ENCODE measurements at regions of chr2 and their contacts with region 1.

Region 1: DNA sequence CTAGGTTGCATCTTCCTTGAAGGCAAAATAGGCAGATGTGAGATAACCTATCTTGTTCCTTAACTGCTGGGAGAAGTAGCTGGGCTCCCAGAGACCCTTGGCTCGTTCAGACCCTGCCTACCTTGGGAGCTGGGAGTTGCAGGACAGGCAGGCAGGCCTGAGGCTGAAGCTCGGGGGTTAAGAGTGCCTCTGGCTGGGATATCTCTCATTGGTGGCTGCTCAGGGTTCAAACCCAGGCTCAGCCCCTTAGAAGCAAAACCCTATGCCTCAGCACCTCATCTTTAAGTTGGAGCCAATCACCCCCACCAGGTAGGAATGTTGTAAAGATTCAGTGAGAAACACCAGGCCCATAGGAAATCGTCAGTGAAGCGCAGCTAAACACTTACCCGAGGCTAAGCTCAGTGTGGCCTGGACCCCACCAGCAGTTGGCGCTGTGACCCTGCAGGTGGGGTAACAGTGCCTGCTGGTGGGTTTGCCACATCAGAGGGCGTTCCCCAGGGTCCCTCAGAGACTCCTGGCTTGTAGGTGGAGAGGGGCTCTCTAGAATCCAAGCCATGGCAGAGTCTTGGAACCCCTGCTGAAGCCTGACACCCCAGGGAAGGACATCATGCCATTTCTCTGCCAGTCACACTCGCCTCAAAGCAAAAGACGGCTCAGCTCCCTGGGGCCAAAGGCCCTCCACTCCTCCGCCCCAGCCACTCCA is 54.6 kb upstream of the GPR17 start:
- DNase-seq: peak; percentile 66
- H3K4me3 ChIP-seq: no peak overlapping the region
- H3K27ac ChIP-seq: no peak overlapping the region
- H3K4me1 ChIP-seq: no peaks in the 10 kb centered on the region
- H3K27me3 ChIP-seq: no peaks in the 10 kb centered on the region
- CTCF ChIP-seq: peak; percentile 94 to 99
- POLR2A ChIP-seq: no peak

Region 2: DNA sequence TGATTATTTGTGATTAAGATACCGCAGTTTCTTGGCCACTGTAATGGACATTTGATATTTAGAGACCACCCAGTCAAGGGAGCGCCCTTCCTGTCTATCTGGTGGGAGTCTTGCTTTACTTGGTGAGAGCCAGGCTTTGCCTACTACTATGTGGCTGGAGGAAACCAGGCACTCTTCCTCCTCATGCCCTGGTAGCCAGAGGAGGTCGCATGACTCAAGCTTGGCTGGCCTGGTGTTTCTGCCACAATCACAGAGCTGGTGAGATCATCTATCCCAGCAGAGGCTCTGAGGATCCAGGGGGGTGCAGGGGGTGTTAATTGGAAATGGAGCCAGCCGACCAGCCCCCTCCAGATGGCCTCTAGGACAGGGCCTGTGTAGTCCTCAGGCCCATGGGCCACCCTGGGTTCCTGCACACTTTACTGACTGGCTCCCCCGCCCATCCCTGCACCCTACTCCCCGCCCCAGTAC is 437.6 kb before region 1 on chr2:
- CTCF ChIA-PET with region 1: no interaction called
- POLR2A ChIA-PET with region 1: no interaction called
- dilution Hi-C with region 1: no loop called
- intact Hi-C with region 1: no loop called
- DNase-seq: peak; percentile 86
- H3K4me3 ChIP-seq: no peak overlapping the region
- H3K27ac ChIP-seq: peak overlapping the region; percentile 33
- H3K4me1 ChIP-seq: peaks cover 14% of the 10 kb centered on the region
- H3K27me3 ChIP-seq: no peaks in the 10 kb centered on the region
- CTCF ChIP-seq: no peak
- POLR2A ChIP-seq: no peak

Region 3: DNA sequence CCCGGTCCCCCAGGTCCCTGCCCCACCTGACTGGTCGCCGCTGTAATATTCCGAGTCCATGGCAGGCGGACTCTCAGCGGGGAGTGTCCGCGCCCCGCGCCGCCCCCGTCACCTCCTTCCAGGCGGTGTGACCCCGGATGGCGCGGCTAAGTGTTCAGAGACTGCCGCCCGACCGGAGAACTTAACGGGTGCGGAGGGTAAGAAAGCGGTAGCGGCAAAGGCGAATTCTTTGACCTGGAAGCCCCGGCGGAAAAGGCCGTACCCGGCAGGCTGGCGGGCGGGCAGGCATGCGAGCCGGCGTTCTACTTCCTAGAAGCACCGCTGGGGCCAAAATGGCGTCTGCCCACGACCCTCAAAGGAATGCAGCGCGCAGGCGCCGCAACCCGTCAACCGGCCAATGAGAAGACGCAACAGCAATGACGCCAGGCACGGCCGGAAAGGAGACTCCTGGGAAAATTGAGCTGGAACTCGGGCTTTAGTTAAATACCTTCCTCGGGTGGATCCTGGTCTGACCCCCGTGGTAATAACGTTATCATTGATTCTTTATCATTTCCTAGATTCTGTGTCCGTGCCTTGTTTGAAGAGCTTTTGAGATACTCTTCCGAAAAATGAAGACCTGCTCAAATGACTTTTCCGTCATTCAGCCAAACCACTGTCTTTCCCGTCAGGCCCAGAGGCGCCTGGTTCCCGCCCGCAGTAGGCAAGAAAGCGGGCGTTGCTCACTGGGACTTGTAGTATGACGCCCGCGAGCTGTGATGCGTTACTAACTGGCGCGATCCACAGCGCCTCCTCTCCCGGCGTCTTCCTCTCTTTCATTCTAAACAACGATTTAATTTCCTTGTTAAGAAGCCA is 65.0 kb before region 1 on chr2 and contains the start of gene IWS1:
- CTCF ChIA-PET with region 1: interaction called, 17 read pairs
- POLR2A ChIA-PET with region 1: no interaction called
- dilution Hi-C with region 1: no loop called
- intact Hi-C with region 1: no loop called
- DNase-seq: peak; percentile 98
- H3K4me3 ChIP-seq: peak within 1 kb of the TSS; percentile 78 to 92 (median 88)
- H3K27ac ChIP-seq: peak within 1 kb of the TSS; percentile 100
- H3K4me1 ChIP-seq: peaks cover 11% of the 10 kb centered on the region
- H3K27me3 ChIP-seq: no peaks in the 10 kb centered on the region
- CTCF ChIP-seq: peak in 1 of 2 donors; percentile 14
- POLR2A ChIP-seq: peak; percentile 88
- total RNA-seq, gene IWS1: 44.9 and 51.0 TPM in 2 replicates

Region 4: GRCh38 chr2:127609031-127609751 is 17.8 kb after region 1 on chr2:
- CTCF ChIA-PET with region 1: interaction called, 23 read pairs
- POLR2A ChIA-PET with region 1: interaction called, 6 read pairs
- dilution Hi-C with region 1: no loop called
- intact Hi-C with region 1: no loop called
- DNase-seq: no peak
- H3K4me3 ChIP-seq: no peak overlapping the region
- H3K27ac ChIP-seq: no peak overlapping the region
- H3K4me1 ChIP-seq: no peaks in the 10 kb centered on the region
- H3K27me3 ChIP-seq: peaks cover 4 to 7% of the 10 kb centered on the region in 2 experiments
- CTCF ChIP-seq: no peak
- POLR2A ChIP-seq: no peak

Region 5: GRCh38 chr2:127649684-127650040 is 58.3 kb after region 1 on chr2:
- CTCF ChIA-PET with region 1: interaction called, 424 read pairs
- POLR2A ChIA-PET with region 1: interaction called, 3 read pairs
- dilution Hi-C with region 1: no loop called
- intact Hi-C with region 1: loop called (anchors 1 kb)
- DNase-seq: peak; percentile 69
- H3K4me3 ChIP-seq: no peak overlapping the region
- H3K27ac ChIP-seq: no peak overlapping the region
- H3K4me1 ChIP-seq: peaks cover 25% of the 10 kb centered on the region
- H3K27me3 ChIP-seq: no peaks in the 10 kb centered on the region
- CTCF ChIP-seq: peak; percentile 85 to 88
- POLR2A ChIP-seq: no peak

Region 6: DNA sequence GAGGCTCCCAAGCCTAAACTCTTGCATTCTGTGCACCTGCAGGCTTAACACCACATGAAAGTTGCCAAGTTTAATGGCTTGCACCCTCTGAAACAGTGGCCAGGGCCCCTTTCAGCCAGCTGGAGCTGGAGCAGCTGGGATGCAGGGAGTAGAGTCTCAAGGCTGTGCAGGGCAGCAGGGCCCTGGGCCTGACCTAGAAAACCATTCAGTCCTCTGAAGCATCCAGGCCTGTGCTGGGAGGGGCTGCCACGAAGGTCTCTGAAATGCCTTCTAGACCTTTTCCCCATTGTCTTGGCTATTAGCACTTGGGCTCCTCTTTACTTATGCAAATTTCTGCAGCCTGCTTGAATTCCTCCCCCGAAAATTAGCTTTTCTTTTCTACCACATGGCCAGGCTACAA is 99.3 kb after region 1 on chr2:
- CTCF ChIA-PET with region 1: interaction called, 162 read pairs
- POLR2A ChIA-PET with region 1: interaction called, 5 read pairs
- dilution Hi-C with region 1: no loop called
- intact Hi-C with region 1: loop called (anchors 1 kb)
- DNase-seq: no peak
- H3K4me3 ChIP-seq: no peak overlapping the region
- H3K27ac ChIP-seq: no peak overlapping the region
- H3K4me1 ChIP-seq: peaks cover 4% of the 10 kb centered on the region
- H3K27me3 ChIP-seq: no peaks in the 10 kb centered on the region
- CTCF ChIP-seq: no peak
- POLR2A ChIP-seq: no peak

Region 7: DNA sequence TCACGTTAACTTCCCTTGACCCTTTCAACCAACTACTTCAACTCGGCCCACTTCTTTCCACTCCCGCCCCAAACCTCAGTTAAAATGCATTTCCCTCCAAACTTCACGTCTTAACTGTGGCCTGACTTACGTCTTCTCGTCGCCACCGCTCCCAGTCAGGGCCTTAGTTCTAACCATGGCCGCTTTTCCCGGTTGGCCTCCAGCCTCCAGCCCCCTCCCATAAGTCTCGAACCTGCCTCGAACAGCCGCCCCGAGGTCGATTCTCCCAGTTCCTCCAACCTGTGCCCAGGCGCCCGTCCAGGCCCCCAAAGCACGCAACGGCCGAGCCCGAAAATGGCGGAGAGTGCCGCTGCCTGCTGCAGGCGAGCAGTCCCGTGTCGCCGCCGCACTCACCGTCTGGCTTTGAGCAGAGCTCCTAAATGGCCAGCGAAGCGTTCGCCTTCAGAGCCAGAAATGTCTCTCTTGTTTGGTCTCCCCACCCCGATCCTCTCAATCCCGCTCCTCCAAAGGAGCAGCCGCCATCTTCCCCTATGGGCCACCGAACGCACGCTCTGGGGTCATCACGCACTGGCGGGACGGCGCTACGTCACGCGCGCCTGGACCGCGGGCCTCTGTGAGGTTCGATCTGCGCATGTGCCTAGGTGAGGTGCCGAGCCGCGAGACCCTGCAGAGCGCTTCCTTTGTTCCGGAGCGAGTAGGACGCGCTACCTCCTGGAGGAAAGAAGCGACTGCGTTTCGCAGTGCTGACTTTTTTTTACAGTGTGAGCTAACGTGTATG is 219.4 kb after region 1 on chr2 and contains the start of gene WDR33:
- CTCF ChIA-PET with region 1: interaction called, 8 read pairs
- POLR2A ChIA-PET with region 1: no interaction called
- dilution Hi-C with region 1: no loop called
- intact Hi-C with region 1: loop called (anchors 5 kb)
- DNase-seq: peak; percentile 91
- H3K4me3 ChIP-seq: peak within 1 kb of the TSS; percentile 50 to 100 (median 97)
- H3K27ac ChIP-seq: peak within 1 kb of the TSS; percentile 83
- H3K4me1 ChIP-seq: peaks cover 10% of the 10 kb centered on the region
- H3K27me3 ChIP-seq: no peaks in the 10 kb centered on the region
- CTCF ChIP-seq: no peak
- POLR2A ChIP-seq: peak; percentile 86
- total RNA-seq, gene WDR33: 52.5 and 54.7 TPM in 2 replicates